CD8-positive, alpha-beta T cell (primary cell): ENCODE measurements at regions of chr9 and their contacts with region 1.

Region 1: DNA sequence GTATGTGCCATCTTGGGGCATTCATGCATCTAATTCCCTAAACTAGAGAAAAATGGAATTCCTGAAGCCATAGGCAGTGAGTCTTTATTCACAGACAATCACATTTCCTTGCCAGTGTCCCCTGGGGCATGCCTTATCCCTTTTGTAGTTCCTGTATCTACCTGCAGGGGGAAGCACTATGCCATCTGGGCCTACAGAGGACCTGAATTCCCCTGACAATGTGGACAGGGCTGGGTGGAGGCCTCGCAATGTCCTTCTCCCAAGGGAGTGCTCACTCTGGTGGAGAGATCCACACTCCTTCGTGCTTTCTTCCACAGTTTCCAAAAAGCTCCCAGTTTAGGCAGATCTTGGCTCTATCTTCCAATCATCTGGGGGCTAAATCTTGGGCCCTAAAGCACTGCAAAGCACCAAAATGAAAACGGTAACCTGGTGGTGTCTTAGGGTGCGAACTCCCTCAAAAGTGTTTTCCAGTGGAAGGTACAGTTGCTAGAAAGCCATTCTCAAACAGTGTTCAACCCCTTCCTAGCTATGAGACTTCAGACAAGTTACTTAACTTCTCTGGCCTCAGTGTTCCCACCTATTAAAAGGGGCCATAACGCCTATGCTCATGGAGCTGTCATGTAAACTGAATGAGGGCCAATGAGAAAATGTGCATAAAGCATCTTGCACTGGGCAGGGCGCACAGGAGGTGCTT is 17.5 kb downstream of the WHRN start:
- DNase-seq: peak; percentile 25 to 83 (median 64)
- ATAC-seq: peak; percentile 85
- H3K4me3 ChIP-seq: no peak overlapping the region
- H3K4me3 Mint-ChIP-seq: no peak overlapping the region
- H3K27ac ChIP-seq: no peak overlapping the region
- H3K27ac Mint-ChIP-seq: no peak overlapping the region
- H3K4me1 ChIP-seq: peaks cover 6% of the 10 kb centered on the region
- H3K4me1 Mint-ChIP-seq: peaks cover 11% of the 10 kb centered on the region
- H3K27me3 ChIP-seq: no peaks in the 10 kb centered on the region
- H3K27me3 Mint-ChIP-seq: no peaks in the 10 kb centered on the region
- CTCF ChIP-seq: peak; percentile 94

Region 2: DNA sequence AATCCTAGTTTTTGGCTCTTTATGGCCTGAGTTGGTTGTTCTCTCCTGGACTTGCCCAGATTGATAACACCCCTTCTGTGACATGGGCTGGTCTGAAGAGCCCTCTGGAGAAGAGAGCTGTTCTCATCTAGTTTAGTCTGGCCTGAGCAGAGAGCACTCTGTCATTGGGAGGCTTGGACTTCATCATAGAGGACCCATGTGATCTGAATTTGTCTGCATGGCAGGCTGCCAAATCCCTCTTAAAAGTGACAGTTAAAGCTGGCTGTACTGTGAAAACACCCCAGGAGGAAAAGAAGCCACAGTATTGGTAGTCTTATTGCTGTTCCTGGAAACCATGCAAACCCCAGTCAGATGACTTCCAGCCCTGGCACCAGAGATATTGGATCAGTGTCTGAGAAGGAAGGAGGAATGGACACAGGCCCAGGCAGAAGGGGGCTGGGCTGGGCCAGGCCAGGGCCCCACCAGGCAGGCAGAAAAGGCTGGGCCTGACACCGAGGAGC is 1144.0 kb before region 1 on chr9:
- CTCF ChIA-PET with region 1: no interaction called
- POLR2A ChIA-PET with region 1: no interaction called
- intact Hi-C with region 1: no loop called
- DNase-seq: peak in 1 of 9 experiments; percentile 32
- ATAC-seq: no peak
- H3K4me3 ChIP-seq: no peak overlapping the region
- H3K4me3 Mint-ChIP-seq: no peak overlapping the region
- H3K27ac ChIP-seq: no peak overlapping the region
- H3K27ac Mint-ChIP-seq: no peak overlapping the region
- H3K4me1 ChIP-seq: peaks cover 19% of the 10 kb centered on the region
- H3K4me1 Mint-ChIP-seq: peaks cover 24% of the 10 kb centered on the region
- H3K27me3 ChIP-seq: no peaks in the 10 kb centered on the region
- H3K27me3 Mint-ChIP-seq: no peaks in the 10 kb centered on the region
- CTCF ChIP-seq: no peak

Region 3: GRCh38 chr9:114452219-114453165 is 35.3 kb before region 1 on chr9:
- CTCF ChIA-PET with region 1: interaction called, 11 read pairs
- POLR2A ChIA-PET with region 1: no interaction called
- intact Hi-C with region 1: no loop called
- DNase-seq: peak in 5 of 9 experiments; percentile 7 to 53 (median 22)
- ATAC-seq: peak; percentile 36
- H3K4me3 ChIP-seq: no peak overlapping the region
- H3K4me3 Mint-ChIP-seq: no peak overlapping the region
- H3K27ac ChIP-seq: peak overlapping the region in 1 of 2 experiments; percentile 23
- H3K27ac Mint-ChIP-seq: peak overlapping the region; percentile 63
- H3K4me1 ChIP-seq: peaks cover 24% of the 10 kb centered on the region
- H3K4me1 Mint-ChIP-seq: peaks cover 28% of the 10 kb centered on the region
- H3K27me3 ChIP-seq: no peaks in the 10 kb centered on the region
- H3K27me3 Mint-ChIP-seq: no peaks in the 10 kb centered on the region
- CTCF ChIP-seq: no peak